ENCODE measurements at regions of chr4 and their contacts with region 1.

Region 1: DNA sequence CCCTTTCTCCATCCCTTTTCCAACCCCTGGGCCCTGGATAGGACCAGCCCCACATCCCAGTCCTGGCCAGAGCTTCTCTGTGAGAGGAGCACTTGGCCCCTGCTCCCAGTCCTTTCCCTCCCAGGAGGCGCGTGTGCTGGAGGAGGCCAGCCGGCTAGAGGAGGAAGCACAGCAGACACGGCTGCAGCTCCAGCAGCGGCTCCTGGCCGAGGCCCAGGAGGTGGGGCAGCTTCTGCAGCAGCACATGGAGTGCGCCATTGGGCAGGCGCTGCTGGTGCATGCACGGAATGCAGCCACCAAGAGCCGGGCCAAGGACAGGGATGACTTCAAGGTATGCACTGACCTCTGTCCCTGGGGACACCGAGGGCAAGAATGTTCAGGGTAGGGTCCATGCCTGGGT is 87.5 kb downstream of the EVC start:
- DNase-seq: no peak
- H3K4me3 ChIP-seq: no peak overlapping the region
- H3K27ac ChIP-seq: no peak overlapping the region
- H3K4me1 ChIP-seq: no peaks in the 10 kb centered on the region
- H3K27me3 ChIP-seq: no peaks in the 10 kb centered on the region
- CTCF ChIP-seq: no peak
- POLR2A ChIP-seq: no peak

Region 2: GRCh38 chr4:5635826-5636195 is 162.7 kb before region 1 on chr4:
- CTCF ChIA-PET with region 1: no interaction called
- POLR2A ChIA-PET with region 1: no interaction called
- dilution Hi-C with region 1: no loop called
- intact Hi-C with region 1: loop called (anchors 10 kb)
- DNase-seq: no peak
- H3K4me3 ChIP-seq: no peak overlapping the region
- H3K27ac ChIP-seq: no peak overlapping the region
- H3K4me1 ChIP-seq: no peaks in the 10 kb centered on the region
- H3K27me3 ChIP-seq: no peaks in the 10 kb centered on the region
- CTCF ChIP-seq: no peak
- POLR2A ChIP-seq: no peak